HEK293 (cell line): ENCODE measurements at regions of chr9 and their contacts with region 1.

Region 1: GRCh38 chr9:114906908-114907571 is 23.4 kb downstream of the TNFSF8 start:
- H3K4me3 ChIP-seq: no peak overlapping the region
- H3K27ac ChIP-seq: peak overlapping the region; percentile 9; the same call in 1 of the 2 replicates
- H3K4me1 ChIP-seq: peaks cover 9% of the 10 kb centered on the region
- CTCF ChIP-seq: peak; percentile 49

Region 2: GRCh38 chr9:114405294-114406034 is 501.6 kb before region 1 on chr9:
- CTCF ChIA-PET with region 1: interaction called, 15 read pairs
- POLR2A ChIA-PET with region 1: no interaction called
- H3K4me3 ChIP-seq: no peak overlapping the region
- H3K27ac ChIP-seq: no peak overlapping the region
- H3K4me1 ChIP-seq: no peaks in the 10 kb centered on the region
- CTCF ChIP-seq: peak; percentile 81

Region 3: GRCh38 chr9:114662081-114662989 is 244.7 kb before region 1 on chr9:
- CTCF ChIA-PET with region 1: interaction called, 100 read pairs
- POLR2A ChIA-PET with region 1: no interaction called
- H3K4me3 ChIP-seq: no peak overlapping the region
- H3K27ac ChIP-seq: no peak overlapping the region
- H3K4me1 ChIP-seq: no peaks in the 10 kb centered on the region
- CTCF ChIP-seq: 0 out of 2 replicates have a peak, but pooled peaks have one; percentile 23

Region 4: GRCh38 chr9:114738581-114739316 is 168.3 kb before region 1 on chr9:
- CTCF ChIA-PET with region 1: interaction called, 311 read pairs
- POLR2A ChIA-PET with region 1: interaction called, 4 read pairs
- H3K4me3 ChIP-seq: no peak overlapping the region
- H3K27ac ChIP-seq: no peak overlapping the region
- H3K4me1 ChIP-seq: no peaks in the 10 kb centered on the region; the same call in 1 of the 2 replicates
- CTCF ChIP-seq: peak; percentile 40; the same call in 1 of the 2 replicates

Region 5: DNA sequence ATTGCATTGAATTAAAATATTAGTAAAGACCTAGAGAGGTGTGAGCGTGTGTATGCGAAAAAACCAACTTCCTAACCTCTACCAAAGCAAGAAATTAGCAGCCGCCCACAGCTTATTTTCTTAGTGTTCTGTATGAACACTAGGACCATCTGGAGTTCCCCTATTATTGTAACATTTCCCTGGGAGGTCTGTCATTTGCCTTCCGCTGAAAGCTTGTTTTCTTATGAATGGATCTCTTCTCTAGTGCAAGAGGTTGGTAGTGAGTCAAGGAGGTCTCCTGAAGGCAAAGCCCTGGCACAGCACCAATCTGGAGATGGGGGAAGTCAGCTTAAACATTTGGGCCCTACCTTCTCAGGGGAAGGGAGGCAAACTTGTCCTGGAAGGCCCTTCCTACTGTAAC is 12.6 kb after region 1 on chr9:
- CTCF ChIA-PET with region 1: interaction called, 41 read pairs
- POLR2A ChIA-PET with region 1: no interaction called
- H3K4me3 ChIP-seq: no peak overlapping the region
- H3K27ac ChIP-seq: no peak overlapping the region
- H3K4me1 ChIP-seq: no peaks in the 10 kb centered on the region
- CTCF ChIP-seq: no peak

Region 6: DNA sequence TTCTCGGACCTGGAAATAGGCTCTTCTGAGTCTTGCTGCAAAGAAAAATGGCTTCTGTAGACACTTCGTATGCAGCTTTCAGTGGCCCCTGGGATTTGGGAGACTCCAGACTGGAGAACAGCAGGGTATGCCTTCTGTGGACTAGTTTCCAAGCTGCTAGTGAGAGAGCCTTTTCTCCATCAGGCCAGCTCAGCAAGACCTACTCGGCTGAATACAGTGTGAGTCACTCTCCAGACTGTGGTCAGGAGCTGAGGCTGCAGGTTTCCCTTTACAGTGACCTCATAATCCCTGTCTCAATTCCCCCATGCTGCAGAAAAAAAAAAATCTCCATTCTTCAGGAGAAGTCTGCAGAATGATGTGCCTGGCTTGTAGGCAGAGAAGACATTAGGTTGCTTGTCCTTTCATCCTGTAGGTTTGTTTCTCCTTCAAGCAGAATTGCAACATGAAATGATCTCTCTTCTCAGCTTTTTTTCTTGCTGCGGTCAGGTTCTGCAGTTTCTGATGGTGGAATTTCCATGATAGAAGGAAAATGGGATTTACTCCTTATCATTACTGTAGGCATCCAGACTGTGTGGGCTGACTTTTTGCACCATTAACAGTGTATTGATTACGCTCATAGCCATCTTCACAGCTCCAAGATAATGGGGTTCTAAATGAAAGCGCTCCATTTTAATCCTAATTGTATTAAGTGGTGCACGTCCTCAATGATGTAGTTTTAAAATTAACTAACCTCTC is 101.7 kb after region 1 on chr9:
- CTCF ChIA-PET with region 1: interaction called, 138 read pairs
- POLR2A ChIA-PET with region 1: no interaction called
- H3K4me3 ChIP-seq: no peak overlapping the region
- H3K27ac ChIP-seq: no peak overlapping the region
- H3K4me1 ChIP-seq: peaks cover 3% of the 10 kb centered on the region
- CTCF ChIP-seq: no peak